ENCODE measurements at regions of chr2 and their contacts with region 1.

Region 1: DNA sequence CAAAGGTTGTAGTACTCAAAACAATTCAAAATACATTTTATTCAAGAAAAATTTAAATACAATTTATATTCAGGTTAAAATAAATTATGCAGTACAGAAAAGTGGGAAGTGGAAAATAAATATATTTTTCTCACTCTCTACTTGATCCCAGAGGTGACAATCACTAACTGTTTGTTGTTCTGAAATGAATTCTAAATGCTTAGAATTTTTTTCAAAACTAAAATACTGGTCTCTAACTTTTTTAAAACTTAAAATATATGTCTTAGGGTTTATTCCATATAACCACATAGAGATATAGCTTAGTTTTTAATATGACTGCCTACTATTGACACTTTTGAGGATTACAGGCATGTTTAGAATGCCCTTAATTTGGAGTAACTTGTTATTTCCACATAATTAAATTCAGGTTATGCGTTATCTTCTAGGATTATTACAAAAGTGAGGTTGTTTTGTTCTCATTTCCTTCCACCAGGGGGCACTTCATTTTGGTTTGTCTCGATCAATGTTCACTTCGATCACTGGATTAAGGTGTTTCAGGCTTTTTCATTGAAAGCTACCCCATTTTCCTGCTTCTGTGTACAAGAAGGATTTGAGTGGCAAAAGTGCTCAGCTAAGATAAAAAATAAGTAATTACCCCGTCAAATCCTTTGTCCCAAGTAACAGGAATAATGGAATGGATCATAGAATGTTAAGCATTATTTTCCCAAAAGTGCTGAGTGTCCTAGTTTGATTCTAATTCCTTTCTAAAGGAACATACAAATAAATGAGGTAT is 27.1 kb upstream of the TFPI start:
- DNase-seq: no peak
- ATAC-seq: no peak

Region 2: GRCh38 chr2:187499941-187500532 is 81.3 kb before region 1 on chr2:
- intact Hi-C with region 1: loop called (anchors 2 kb)
- DNase-seq: peak; percentile 37
- ATAC-seq: peak; percentile 66

Region 3: GRCh38 chr2:188512456-188512855 is 931.1 kb after region 1 on chr2:
- intact Hi-C with region 1: loop called (anchors 10 kb)
- DNase-seq: no peak
- ATAC-seq: no peak